Activated CD4-positive, alpha-beta T cell treated with anti-CD3 and anti-CD28 coated beads, Interleukin-2, amount 10 ng/mL, durations not matched to agents 24 days and 14 days (primary cell): ENCODE measurements at regions of chr9 and their contacts with region 1.

Region 1: DNA sequence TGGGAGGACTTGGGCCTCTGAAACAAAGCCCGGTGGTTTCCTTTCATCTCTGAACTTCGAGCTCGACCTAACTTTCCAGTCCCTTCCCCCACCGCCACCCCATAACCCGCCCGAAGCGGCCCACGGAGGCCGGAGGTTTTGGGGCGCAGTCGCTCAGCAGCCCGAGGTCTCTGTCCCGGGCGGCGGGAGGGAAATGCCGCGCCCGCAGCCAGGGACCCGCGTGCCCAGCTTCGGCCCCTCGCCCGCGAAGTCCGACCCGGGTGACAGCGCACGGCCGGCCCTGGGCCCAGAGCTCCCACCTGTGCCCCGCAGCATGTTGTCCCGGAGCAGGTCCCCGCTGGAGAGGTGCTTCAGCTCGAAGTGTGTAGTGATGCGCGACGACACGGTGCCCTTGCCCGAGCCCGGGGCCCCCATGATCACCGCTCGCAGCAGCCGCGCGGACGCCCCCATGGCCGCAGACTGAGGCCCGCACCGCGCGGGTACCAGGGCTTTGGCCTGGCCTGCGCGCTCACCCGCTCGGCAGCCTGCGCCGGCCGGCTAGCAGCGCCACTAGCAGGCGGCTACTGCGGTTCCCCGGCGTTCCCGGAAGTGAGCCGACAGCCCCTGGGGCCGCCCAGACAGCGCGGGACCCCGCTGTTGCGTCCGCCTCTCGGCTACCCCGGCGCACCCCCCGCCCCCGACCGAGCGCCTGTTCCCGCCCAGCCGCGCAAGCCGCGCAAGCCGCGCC is at the start of gene AK3:
- DNase-seq: peak; percentile 96
- H3K4me3 Mint-ChIP-seq: peak within 1 kb of the TSS; percentile 87
- H3K27ac Mint-ChIP-seq: peak within 1 kb of the TSS; percentile 90
- H3K4me1 Mint-ChIP-seq: peaks cover 31% of the 10 kb centered on the region
- H3K27me3 Mint-ChIP-seq: no peaks in the 10 kb centered on the region
- total RNA-seq, gene AK3: 22.9 and 27.3 TPM in 2 replicates

Region 2: DNA sequence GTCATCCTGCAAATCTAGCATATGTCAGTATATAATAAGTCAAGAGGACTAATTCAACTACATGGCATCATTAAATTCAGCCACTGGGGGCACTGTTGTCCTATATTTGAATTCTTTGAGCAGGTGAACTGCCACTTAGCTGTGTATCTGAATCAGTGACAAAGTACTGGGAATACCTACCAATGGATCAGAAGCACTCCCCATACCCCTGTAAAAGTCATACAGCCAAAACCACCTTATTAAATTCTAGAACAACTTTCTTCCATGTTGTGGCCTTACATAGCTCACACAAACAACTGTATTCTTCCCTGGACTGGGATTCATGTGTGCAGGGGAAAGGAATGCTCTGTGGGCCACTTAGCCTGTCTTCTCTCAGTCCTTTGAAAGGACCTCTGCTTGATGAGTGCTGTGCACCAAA is 136.1 kb before region 1 on chr9:
- intact Hi-C with region 1: loop called (anchors 5 kb)
- DNase-seq: peak; percentile 91
- H3K4me3 Mint-ChIP-seq: no peak overlapping the region
- H3K27ac Mint-ChIP-seq: no peak overlapping the region
- H3K4me1 Mint-ChIP-seq: peaks cover 14% of the 10 kb centered on the region
- H3K27me3 Mint-ChIP-seq: peaks cover 1% of the 10 kb centered on the region

Region 3: DNA sequence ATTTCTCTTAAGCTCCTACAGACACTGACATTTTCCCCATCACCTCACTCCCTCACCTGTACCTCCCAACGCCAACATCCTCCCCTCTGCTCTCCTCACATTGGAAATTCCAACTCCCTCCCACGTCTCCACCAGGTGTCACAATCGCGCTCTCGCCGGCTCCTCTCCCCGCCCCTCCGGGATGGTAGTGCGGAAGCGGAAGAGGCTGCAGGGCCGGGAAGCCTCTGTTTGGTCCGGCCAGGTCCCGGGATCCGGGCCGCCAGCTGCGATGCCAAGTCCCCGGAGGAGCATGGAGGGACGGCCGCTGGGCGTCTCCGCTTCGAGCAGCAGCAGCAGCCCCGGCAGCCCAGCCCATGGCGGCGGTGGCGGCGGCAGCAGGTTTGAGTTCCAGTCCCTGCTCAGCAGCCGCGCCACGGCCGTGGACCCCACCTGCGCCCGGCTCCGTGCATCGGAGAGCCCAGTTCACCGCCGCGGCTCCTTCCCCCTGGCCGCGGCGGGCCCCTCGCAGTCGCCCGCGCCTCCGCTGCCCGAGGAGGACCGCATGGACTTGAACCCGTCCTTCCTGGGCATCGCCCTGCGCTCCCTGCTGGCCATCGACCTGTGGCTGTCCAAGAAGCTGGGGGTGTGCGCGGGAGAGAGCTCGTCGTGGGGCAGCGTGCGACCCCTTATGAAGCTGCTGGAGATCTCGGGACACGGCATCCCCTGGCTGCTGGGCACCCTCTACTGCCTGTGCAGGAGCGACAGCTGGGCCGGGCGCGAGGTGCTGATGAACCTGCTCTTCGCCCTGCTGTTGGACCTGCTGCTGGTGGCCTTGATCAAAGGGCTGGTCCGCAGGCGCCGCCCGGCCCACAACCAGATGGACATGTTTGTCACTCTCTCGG is 78.5 kb before region 1 on chr9 and contains the start of gene PLPP6:
- intact Hi-C with region 1: loop called (anchors 1 kb)
- DNase-seq: peak; percentile 94
- H3K4me3 Mint-ChIP-seq: peak within 1 kb of the TSS; percentile 87
- H3K27ac Mint-ChIP-seq: peak within 1 kb of the TSS; percentile 79
- H3K4me1 Mint-ChIP-seq: peaks cover 43% of the 10 kb centered on the region
- H3K27me3 Mint-ChIP-seq: peaks cover 10% of the 10 kb centered on the region
- total RNA-seq, gene PLPP6: 5.5 and 6.0 TPM in 2 replicates

Region 4: DNA sequence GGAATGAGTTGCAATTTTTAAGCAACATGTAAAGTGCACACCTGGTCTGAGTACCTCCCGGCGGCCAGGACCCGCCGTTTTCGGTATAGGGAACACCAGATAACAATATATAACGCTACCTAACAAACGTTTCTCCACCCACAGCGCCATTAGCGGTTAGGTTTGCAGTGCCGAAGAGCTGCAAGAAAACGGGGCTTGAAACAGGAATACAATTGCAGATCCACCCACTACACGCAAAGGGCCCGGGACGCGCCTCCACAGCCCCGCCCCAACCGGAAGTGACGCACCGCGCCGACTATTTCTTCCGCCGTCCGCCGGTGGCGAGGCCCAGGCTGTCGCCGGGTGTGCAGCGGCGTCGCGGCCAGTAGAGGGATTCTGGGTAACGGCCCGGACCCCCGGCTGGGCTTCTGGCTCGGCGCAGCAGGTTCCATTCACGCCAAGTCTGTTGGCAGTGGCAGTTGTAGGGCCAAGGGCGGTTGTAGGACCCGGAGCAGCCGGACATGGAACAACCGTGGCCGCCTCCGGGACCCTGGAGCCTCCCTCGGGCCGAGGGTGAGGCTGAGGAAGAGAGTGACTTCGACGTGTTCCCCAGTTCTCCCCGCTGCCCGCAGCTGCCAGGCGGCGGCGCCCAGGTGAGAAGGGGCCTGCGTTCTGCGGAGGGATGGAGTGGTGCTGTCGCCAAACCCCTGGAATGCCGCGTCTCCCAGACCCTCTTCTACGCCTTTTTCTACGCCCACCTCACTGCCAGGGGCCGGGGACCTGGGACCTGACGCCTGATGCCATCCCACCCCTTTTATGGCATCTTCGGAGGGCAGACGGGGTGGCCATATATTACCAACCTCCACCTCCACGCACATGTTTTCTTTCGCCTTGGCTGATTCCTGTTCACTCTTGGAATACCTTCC is 61.3 kb before region 1 on chr9 and contains the start of gene CDC37L1:
- intact Hi-C with region 1: loop called (anchors 1 kb)
- DNase-seq: peak; percentile 100
- H3K4me3 Mint-ChIP-seq: no peak within 1 kb of the TSS
- H3K27ac Mint-ChIP-seq: no peak within 1 kb of the TSS
- H3K4me1 Mint-ChIP-seq: peaks cover 7% of the 10 kb centered on the region
- H3K27me3 Mint-ChIP-seq: no peaks in the 10 kb centered on the region
- total RNA-seq, gene CDC37L1: 11.3 and 12.1 TPM in 2 replicates

Region 5: GRCh38 chr9:4689687-4690104 is 51.1 kb before region 1 on chr9:
- intact Hi-C with region 1: loop called (anchors 2 kb)
- DNase-seq: peak; percentile 56
- H3K4me3 Mint-ChIP-seq: peak overlapping the region; percentile 9
- H3K27ac Mint-ChIP-seq: peak overlapping the region; percentile 70
- H3K4me1 Mint-ChIP-seq: peaks cover 20% of the 10 kb centered on the region
- H3K27me3 Mint-ChIP-seq: no peaks in the 10 kb centered on the region

Region 6: GRCh38 chr9:5326893-5327548 is 586.2 kb after region 1 on chr9:
- intact Hi-C with region 1: no loop called
- DNase-seq: peak; percentile 76
- H3K4me3 Mint-ChIP-seq: no peak overlapping the region
- H3K27ac Mint-ChIP-seq: no peak overlapping the region
- H3K4me1 Mint-ChIP-seq: peaks cover 8% of the 10 kb centered on the region
- H3K27me3 Mint-ChIP-seq: no peaks in the 10 kb centered on the region